WTC11 (cell line): ENCODE measurements at regions of chr6 and their contacts with region 1.

Region 1: GRCh38 chr6:41167173-41167963 is 4.5 kb upstream of the TREM2 start:
- DNase-seq: peak; percentile 71
- ATAC-seq: peak; percentile 57
- H3K4me3 Mint-ChIP-seq: no peak overlapping the region
- H3K27ac Mint-ChIP-seq: no peak overlapping the region
- H3K4me1 Mint-ChIP-seq: peaks cover 16% of the 10 kb centered on the region
- H3K27me3 Mint-ChIP-seq: no peaks in the 10 kb centered on the region; the same call in 1 of the 2 replicates
- CTCF ChIP-seq: no peak

Region 2: DNA sequence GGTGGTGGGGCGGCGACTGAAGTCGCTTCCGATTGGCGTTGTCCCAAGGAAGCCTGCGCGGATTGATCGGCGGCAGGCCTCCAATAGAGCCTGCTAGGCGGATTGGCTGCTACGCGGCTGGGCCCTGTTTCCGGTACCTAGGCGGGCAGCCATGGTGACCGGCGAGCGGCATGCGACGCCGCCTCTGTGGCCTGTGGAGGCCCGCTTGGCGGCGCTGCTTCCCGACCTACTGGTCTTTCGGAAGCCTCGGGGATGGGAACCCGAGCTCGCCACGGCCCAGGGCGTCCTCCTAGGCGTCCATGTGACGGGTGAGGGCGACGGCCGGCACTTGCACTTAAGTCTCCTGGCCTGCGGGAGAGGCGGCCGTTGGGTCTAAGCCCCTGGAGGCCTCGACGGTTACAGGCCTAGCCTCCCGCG is 66.5 kb before region 1 on chr6:
- CTCF ChIA-PET with region 1: interaction called, 10 read pairs
- POLR2A ChIA-PET with region 1: no interaction called
- DNase-seq: peak; percentile 94
- ATAC-seq: peak; percentile 98
- H3K4me3 Mint-ChIP-seq: peak overlapping the region; percentile 48
- H3K27ac Mint-ChIP-seq: peak overlapping the region; percentile 80; the same call in 1 of the 2 replicates
- H3K4me1 Mint-ChIP-seq: peaks cover 18% of the 10 kb centered on the region
- H3K27me3 Mint-ChIP-seq: peaks cover 6% of the 10 kb centered on the region; the same call in 1 of the 2 replicates
- CTCF ChIP-seq: no peak